Motor neuron (in vitro differentiated cells): ENCODE measurements at regions of chr20 and their contacts with region 1.

Region 1: DNA sequence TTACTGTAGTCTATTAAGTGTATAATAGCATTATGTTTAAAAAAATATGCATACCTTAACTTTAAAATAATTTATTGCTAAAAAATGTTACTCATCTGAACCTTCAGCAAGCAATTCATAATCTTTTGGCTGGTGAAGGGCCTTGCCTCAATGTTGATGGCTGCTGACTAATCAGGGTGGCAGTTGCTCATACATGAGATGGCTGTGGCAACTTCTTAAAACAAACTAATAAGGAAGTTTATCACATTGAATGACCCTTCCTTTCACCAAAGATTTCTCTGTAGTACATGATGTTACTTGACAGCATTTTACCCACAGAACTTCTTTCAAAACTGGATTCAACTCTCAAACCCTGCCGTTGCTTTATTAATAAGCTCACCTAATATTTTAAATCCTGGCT is 84.0 kb downstream of the TASP1 start:
- ATAC-seq: no peak
- H3K4me3 ChIP-seq: no peak overlapping the region
- H3K27ac ChIP-seq: no peak overlapping the region
- H3K4me1 ChIP-seq: no peaks in the 10 kb centered on the region

Region 2: GRCh38 chr20:13221673-13222318 is 332.9 kb before region 1 on chr20:
- in situ Hi-C with region 1: no loop called
- ATAC-seq: peak; percentile 78 to 85 (median 80)
- H3K4me3 ChIP-seq: peak overlapping the region; percentile 50 to 92 (median 78)
- H3K27ac ChIP-seq: no peak overlapping the region
- H3K4me1 ChIP-seq: peaks cover 6% of the 10 kb centered on the region in 2 donors

Region 3: GRCh38 chr20:13302647-13303450 is 251.9 kb before region 1 on chr20:
- in situ Hi-C with region 1: loop called in 3 of 9 experiments (anchors 25 kb)
- ATAC-seq: peak in 4 of 8 experiments; percentile 76 to 90 (median 82)
- H3K4me3 ChIP-seq: no peak overlapping the region
- H3K27ac ChIP-seq: no peak overlapping the region
- H3K4me1 ChIP-seq: no peaks in the 10 kb centered on the region